ENCODE measurements at regions of chr10 and their contacts with region 1.

Region 1: DNA sequence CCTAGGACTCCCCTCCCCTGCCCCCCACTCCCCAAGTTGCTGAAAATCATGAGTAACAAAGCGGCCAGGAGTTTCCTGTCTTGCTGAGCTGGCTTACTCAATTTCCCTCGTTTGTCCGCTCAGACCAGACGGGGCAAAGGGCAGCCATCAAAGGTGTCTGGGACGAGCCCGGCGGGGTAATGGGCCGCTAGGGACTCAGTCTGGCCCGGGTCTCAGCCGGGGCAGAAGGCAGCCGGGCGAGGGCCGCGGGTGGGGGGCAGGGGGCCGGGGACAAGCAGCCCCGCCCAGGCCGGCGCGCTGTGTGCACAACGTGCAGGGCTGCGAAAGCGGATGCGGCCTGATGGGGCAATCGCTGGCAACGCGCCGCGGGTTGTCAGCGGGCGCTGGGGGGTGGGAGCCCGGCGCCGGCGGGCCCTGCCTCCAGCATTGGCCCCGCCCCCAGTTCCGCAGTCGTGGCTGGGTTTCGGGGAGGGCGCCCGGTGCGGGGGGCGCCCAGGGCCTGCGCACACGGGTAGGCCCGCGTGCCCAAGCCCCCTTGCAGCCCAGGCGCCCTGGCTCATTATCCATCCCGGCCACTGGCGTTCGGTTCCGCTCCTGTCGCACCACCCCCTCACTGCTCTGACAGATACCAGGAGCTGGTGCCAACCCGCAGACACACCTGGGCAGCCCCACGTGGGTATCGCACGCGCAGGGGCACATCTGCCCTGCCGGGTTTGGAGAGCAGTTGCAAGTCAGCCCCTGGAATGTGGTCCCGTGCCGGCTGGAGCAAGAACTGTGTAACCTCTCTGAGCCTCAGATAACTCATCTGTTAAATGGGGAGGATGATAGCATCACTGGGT is 35.1 kb downstream of the DNAJB12 start:
- DNase-seq: peak; percentile 97
- ATAC-seq: peak; percentile 78

Region 2: DNA sequence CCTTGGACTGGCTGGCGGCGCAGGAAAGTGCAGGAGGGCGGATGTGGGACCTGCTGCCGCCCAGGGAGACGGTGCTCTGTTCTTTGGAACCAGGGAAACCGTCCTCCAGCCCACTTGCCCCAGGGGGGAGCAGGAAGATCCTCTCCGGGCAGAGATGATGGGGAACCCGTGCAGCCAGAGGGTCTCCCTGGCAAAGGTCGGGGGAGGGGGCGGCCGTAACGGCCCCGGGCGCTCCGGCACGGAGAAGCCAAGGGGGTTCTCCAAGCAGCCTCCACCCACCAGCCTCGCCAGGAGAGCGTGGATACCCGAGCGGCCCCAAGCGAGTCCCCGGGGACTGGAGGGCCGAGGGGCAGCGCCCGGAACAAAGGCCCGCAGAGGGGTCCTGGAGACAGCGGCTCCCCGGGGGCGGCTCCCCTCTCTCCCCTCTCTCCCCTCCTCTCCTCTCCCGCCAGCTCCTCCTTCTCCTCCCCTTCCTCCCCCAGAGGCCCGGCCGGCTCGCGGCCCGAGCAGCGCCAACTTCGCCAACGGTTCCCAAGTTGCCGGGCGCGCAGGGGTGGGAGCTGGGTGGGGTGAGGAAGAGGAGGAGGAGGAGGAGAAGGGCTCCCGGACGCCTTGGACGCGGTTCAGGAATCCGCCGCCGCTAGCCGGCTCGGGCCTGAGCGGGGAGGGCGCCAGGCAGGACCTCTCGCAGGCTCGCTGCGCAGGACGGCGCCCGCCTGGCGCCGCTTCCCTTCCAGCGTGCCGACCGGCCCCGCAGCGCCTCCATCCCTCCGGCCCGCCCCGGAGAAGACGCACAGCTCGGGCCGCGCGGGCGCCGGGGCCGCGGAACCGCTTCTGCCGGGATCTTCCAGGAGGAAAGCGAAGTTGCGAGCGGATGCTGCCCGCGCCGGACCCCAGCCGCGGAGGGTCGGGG is 355.6 kb before region 1 on chr10 and contains the start of gene CHST3:
- intact Hi-C with region 1: loop called (anchors 10 kb)
- DNase-seq: peak; percentile 89
- ATAC-seq: peak; percentile 78
- total RNA-seq, gene CHST3: 36.5 TPM

Measured in sciatic nerve (tissue), 2 donors.